Transverse colon (tissue), 4 donors: ENCODE measurements at regions of chr4 and their contacts with region 1.

Region 1: DNA sequence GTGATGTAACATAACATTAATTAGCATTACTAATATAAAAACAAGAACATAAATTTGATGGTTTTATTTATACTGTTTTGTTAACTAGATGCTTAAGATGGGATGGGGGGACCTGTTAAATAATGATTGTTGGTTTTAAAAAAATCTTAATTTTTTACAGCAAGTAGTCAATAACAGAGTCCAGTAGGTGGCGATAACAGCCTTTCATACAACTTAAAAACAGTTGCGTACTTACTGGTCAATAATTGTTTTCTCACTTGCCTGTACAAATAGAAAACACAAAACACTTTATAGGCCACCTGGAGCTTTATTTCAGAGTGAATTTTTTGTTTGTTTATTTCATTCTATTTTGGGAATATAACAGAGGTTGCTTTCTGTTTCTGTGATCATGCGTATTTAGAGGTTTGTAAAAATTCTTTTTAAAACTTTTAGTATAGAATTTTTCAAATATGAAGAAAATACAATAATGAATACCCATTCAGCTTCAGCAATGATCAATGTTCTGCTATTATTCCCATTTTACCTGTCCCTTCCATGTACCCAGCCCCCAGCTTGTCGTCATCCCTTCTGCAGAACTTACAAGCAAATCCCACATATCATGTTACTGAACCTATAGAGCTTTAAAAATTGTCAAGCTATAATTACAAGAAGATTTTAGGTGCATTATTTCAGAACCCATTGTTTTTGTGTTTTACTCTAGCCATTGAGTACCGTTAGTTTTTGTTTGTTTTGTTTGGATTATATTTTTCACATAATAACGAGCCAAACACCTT is 97.1 kb downstream of the MRPL1 start:
- DNase-seq: no peak
- H3K4me3 ChIP-seq: no peak overlapping the region
- H3K27ac ChIP-seq: no peak overlapping the region
- H3K4me1 ChIP-seq: peaks cover 0 to 4% (median 0%) of the 10 kb centered on the region in 4 donors
- H3K27me3 ChIP-seq: no peaks in the 10 kb centered on the region
- CTCF ChIP-seq: peak; percentile 50 to 65 (median 61)
- EP300 ChIP-seq: no peak
- POLR2A ChIP-seq: no peak

Region 2: DNA sequence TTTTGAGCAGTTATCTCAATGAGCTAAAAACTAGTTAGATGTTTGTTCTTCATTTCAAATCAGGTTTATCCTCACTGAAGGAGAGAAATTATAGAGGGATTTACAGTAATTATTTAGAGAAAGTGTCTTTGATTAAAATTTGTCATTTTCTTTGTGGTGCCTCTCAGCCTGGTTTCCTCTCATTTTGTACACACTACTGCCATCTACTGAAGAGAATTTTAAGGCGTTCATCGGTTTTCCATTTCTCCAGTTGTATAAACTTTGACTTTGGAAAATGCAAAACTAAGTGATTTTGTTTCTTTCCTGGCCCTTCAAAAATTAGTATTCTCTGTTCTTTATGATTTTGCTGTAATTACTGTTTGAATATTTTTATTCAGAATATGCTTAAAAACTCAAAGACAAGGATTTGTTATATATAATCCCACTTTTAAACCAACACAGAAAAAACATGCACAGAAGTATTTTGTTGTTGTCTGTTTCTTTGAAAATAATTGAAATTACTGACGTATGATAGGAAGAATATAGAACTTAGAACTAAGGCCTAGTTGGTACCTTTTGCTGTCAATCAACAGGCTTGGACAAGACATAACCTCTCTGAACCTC is 557.4 kb after region 1 on chr4:
- in situ Hi-C with region 1: loop called (anchors 10 to 25 kb)
- intact Hi-C with region 1: no loop called
- DNase-seq: no peak
- H3K4me3 ChIP-seq: no peak overlapping the region
- H3K27ac ChIP-seq: no peak overlapping the region
- H3K4me1 ChIP-seq: peaks cover 0 to 10% (median 4%) of the 10 kb centered on the region in 4 donors
- H3K27me3 ChIP-seq: no peaks in the 10 kb centered on the region
- CTCF ChIP-seq: peak; percentile 46 to 58 (median 48)
- EP300 ChIP-seq: no peak
- POLR2A ChIP-seq: no peak